Dendritic cell treated with granulocyte-macrophage colony-stimulating factor and Interleukin-4, amounts not matched to agents 40 ng/mL and 50 ng/mL, for 4 days (primary cell): ENCODE measurements at regions of chr21 and their contacts with region 1.

Region 1: DNA sequence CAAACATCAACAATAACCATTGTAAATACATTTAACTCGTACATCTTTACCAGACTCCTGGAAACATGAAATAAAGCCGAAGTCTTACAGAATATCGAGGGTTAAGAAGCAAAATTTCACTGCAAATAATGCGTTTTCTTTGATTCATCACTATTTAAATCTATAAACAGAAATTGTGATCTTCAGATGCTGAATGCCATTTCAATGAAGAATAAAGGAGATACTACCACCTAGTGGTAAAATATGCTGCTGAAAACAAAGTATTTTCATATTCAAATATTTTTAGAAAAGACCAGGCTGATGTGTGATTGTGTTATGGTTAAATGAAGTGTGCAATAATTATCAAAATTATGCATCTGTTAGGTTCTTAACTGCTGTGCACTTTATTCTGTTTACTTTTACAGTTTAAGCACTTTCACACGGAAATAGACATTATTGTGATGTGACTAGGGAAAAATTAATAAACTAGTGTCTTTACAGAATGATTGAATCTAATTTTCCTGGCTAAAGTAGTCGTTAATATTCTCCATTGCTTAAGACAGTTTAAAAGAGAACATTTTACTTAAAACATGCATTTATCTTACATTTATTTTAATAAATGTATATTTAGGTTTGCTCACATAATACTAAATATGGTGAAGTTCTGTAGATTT is 1093.1 kb downstream of the MRPL39 start:
- H3K4me3 Mint-ChIP-seq: no peak overlapping the region
- H3K27ac Mint-ChIP-seq: no peak overlapping the region
- H3K4me1 Mint-ChIP-seq: no peaks in the 10 kb centered on the region
- H3K27me3 Mint-ChIP-seq: no peaks in the 10 kb centered on the region

Region 2: GRCh38 chr21:23853796-23854379 is 660.3 kb before region 1 on chr21:
- intact Hi-C with region 1: loop called (anchors 1 kb)
- H3K4me3 Mint-ChIP-seq: no peak overlapping the region
- H3K27ac Mint-ChIP-seq: no peak overlapping the region
- H3K4me1 Mint-ChIP-seq: no peaks in the 10 kb centered on the region
- H3K27me3 Mint-ChIP-seq: no peaks in the 10 kb centered on the region

Region 3: DNA sequence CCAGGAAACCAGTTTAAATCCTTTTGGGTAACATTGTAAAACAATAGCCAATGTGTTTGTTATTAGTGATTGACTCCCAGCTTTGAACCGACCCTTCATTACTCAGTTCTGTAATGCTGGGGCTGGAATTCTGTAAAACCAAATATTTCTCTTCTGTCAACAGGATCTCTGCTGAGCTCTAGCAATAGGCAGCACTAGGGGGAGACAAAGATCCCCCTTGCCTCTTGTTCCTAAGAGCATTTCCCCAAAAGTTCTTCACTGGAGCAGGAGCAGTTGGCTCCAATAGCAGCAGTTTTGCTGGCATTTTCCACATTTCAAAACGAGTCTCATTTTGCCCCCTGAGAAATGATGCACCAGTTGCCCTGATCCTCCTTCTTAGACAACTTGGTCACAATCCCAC is 578.0 kb before region 1 on chr21:
- intact Hi-C with region 1: loop called (anchors 5 kb)
- H3K4me3 Mint-ChIP-seq: no peak overlapping the region
- H3K27ac Mint-ChIP-seq: no peak overlapping the region
- H3K4me1 Mint-ChIP-seq: no peaks in the 10 kb centered on the region
- H3K27me3 Mint-ChIP-seq: peaks cover 1% of the 10 kb centered on the region

Region 4: GRCh38 chr21:24336491-24336890 is 177.7 kb before region 1 on chr21:
- intact Hi-C with region 1: no loop called
- H3K4me3 Mint-ChIP-seq: no peak overlapping the region
- H3K27ac Mint-ChIP-seq: no peak overlapping the region
- H3K4me1 Mint-ChIP-seq: peaks cover 5% of the 10 kb centered on the region
- H3K27me3 Mint-ChIP-seq: no peaks in the 10 kb centered on the region

Region 5: GRCh38 chr21:24375201-24375600 is 139.0 kb before region 1 on chr21:
- intact Hi-C with region 1: loop called (anchors 1 kb)
- H3K4me3 Mint-ChIP-seq: no peak overlapping the region
- H3K27ac Mint-ChIP-seq: no peak overlapping the region
- H3K4me1 Mint-ChIP-seq: no peaks in the 10 kb centered on the region
- H3K27me3 Mint-ChIP-seq: no peaks in the 10 kb centered on the region

Region 6: DNA sequence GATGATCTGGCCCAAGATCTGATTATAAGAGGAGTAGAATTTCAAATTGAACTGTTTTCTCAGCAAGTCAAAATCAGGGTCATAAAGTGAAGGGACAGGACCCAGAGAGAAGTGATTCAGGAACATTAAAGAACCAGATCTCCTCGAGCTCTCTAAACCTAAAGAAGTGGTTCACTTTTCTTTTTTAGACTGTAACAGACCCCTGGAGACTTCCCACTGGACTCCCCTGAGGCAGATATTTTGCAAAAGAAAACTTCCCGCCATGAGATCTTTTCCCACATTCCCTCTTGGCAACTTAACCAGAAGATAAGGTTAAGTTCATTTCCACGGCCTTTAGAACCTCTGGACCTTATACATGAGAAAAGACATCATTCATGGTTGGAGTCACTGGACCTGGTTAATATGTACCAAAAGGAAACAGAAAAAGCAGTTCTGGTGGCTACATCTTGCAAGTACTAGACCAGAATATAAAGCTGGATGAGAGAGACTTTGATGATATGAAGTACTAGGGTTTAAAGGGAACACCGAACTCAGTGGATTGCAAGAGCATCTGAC is 31.7 kb after region 1 on chr21:
- intact Hi-C with region 1: no loop called
- H3K4me3 Mint-ChIP-seq: no peak overlapping the region
- H3K27ac Mint-ChIP-seq: no peak overlapping the region
- H3K4me1 Mint-ChIP-seq: no peaks in the 10 kb centered on the region
- H3K27me3 Mint-ChIP-seq: no peaks in the 10 kb centered on the region

Region 7: GRCh38 chr21:25385911-25386474 is 871.8 kb after region 1 on chr21:
- intact Hi-C with region 1: loop called (anchors 10 kb)
- H3K4me3 Mint-ChIP-seq: no peak overlapping the region
- H3K27ac Mint-ChIP-seq: no peak overlapping the region
- H3K4me1 Mint-ChIP-seq: peaks cover 5% of the 10 kb centered on the region
- H3K27me3 Mint-ChIP-seq: peaks cover 7% of the 10 kb centered on the region